Panc1 (cell line): ENCODE measurements at regions of chr3 and their contacts with region 1.

Region 1: GRCh38 chr3:134794950-134795745 is at the start of gene EPHB1:
- DNase-seq: peak; percentile 54
- ATAC-seq: peak; percentile 90
- H3K4me3 ChIP-seq: peak within 1 kb of the TSS; percentile 45 to 56
- H3K27ac ChIP-seq: no peak within 1 kb of the TSS
- H3K4me1 ChIP-seq: no peaks in the 10 kb centered on the region; the same call in 1 of the 2 replicates
- H3K27me3 ChIP-seq: peaks cover 29% of the 10 kb centered on the region
- CTCF ChIP-seq: peak; percentile 99
- total RNA-seq, gene EPHB1: 0.46 TPM

Region 2: DNA sequence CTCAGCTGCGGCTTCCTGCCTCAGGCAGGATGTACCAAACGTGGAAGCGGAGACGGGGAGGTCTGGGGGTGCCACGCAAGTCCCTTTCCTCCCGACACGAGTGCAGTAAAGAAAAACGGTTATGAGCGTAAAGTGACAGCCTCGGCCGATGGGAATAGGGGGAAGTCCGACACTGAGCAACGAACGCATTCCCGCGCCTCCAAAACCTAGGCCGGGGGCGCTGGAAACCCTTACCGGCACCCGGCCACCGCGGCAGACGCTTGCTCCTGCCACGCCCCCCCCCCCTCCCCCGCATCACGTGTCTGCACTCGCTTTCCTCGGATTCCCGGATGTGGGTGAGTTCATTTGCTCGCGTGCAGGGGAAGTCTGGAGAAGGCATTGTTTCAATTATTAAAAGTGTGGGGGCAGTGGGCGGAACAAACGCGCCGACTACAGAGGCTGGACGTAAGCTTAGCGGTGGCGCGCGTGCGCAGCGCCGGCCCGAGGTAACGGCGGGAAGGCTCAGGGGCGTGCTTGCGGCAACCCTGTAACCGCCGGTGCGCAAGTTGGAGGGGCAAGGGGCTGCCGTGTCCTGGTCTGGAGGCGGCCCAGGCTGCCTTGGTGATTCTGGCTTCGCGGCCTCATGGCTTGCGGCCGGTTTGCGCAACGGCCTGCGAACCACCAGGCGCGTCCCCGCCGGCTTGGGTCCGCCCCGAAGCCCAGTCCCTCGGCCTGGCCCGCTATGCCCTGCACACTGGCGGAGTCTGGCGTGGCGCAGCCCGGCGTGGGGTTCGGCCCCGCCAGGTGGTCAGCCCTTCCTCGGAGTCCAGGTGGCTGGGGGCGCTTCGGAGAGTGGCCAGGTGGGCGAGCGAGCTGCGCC is 309.2 kb before region 1 on chr3 and contains the starts of genes ANAPC13 and CEP63:
- CTCF ChIA-PET with region 1: no interaction called
- POLR2A ChIA-PET with region 1: no interaction called
- in situ Hi-C with region 1: no loop called
- intact Hi-C with region 1: no loop called
- DNase-seq: peak; percentile 97
- ATAC-seq: peak; percentile 93
- H3K4me3 ChIP-seq: peak within 1 kb of the TSS; percentile 96 to 98
- H3K27ac ChIP-seq: peak within 1 kb of the TSS; percentile 100
- H3K4me1 ChIP-seq: peaks cover 30% of the 10 kb centered on the region
- H3K27me3 ChIP-seq: no peaks in the 10 kb centered on the region
- CTCF ChIP-seq: no peak
- total RNA-seq, gene ANAPC13: 68.8 TPM
- total RNA-seq, gene CEP63: 30.5 TPM

Region 3: GRCh38 chr3:134542287-134542958 is 252.7 kb before region 1 on chr3:
- CTCF ChIA-PET with region 1: no interaction called
- POLR2A ChIA-PET with region 1: no interaction called
- in situ Hi-C with region 1: no loop called
- intact Hi-C with region 1: no loop called
- DNase-seq: no peak
- ATAC-seq: peak; percentile 30; the same call in 1 of the 2 replicates
- H3K4me3 ChIP-seq: no peak overlapping the region
- H3K27ac ChIP-seq: no peak overlapping the region
- H3K4me1 ChIP-seq: no peaks in the 10 kb centered on the region
- H3K27me3 ChIP-seq: no peaks in the 10 kb centered on the region
- CTCF ChIP-seq: peak; percentile 22

Region 4: DNA sequence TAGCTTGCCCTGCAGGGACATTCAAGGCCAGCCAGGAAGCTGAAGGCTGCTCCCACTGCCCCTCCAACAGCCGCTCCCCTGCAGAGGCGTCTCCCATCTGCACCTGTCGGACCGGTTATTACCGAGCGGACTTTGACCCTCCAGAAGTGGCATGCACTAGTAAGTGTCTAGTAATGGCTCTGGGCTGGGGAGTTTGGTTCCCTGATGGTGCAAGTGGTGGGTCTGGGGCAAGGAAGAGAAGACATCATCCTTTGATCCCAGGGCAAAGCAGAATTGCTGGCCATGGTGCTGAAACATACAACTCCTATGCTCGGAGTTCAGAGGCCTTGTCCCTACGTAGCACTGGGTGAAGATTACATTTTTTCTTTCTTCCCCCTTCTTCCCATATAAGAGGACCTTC is 311.3 kb after region 1 on chr3:
- CTCF ChIA-PET with region 1: interaction called, 12 read pairs
- POLR2A ChIA-PET with region 1: no interaction called
- in situ Hi-C with region 1: no loop called
- intact Hi-C with region 1: no loop called
- DNase-seq: no peak
- ATAC-seq: no peak
- H3K4me3 ChIP-seq: no peak overlapping the region
- H3K27ac ChIP-seq: no peak overlapping the region
- H3K4me1 ChIP-seq: no peaks in the 10 kb centered on the region
- H3K27me3 ChIP-seq: no peaks in the 10 kb centered on the region
- CTCF ChIP-seq: no peak

Region 5: GRCh38 chr3:135229018-135229495 is 433.9 kb after region 1 on chr3:
- CTCF ChIA-PET with region 1: no interaction called
- POLR2A ChIA-PET with region 1: no interaction called
- in situ Hi-C with region 1: no loop called
- intact Hi-C with region 1: loop called (anchors 10 kb)
- DNase-seq: no peak
- ATAC-seq: no peak
- H3K4me3 ChIP-seq: no peak overlapping the region
- H3K27ac ChIP-seq: no peak overlapping the region
- H3K4me1 ChIP-seq: no peaks in the 10 kb centered on the region
- H3K27me3 ChIP-seq: no peaks in the 10 kb centered on the region
- CTCF ChIP-seq: no peak

Region 6: DNA sequence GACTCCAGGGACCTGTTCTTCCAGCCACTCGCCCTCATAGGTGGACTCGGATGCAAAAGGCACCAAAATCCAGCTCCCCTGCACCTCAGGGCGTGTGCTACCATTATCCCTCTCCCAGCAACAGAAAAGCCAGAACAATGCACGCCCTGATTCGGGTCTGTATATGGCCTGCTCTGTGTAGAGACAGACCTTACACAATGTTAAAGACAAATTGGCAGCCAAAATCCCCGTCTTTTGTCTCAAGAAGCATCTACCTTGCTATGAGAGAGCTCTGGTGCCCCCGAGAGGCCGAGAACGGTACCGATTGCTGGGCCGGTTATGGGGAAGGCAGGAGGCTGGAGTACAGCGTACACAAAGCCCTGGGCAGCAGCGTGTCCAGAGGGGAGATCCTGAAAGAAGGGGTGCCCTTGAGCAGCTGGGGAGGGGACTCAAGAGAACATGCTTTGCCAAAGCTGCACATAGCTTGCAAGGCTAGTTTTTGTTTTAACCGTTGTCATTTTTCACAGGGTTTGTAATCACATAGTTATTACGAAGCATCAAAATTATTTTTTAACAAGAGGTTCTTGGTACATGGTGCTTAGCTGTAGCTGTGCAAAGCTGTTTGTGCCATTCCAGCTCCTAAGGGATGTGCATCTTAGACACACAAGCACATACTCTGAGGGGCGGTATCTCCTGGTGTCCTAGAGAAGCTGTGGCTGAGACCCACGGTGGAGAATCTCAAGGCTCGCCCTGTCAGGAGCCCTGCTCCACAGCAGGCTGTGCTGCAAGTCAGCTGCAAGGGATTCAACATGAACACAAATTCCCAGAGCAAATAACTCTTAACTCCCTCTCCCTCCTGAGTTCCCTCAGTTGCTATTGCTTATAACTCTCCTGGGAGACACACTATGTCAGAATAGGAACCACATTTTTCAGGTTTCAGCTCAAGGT is 708.9 kb after region 1 on chr3:
- CTCF ChIA-PET with region 1: interaction called, 21 read pairs
- POLR2A ChIA-PET with region 1: no interaction called
- in situ Hi-C with region 1: no loop called
- intact Hi-C with region 1: loop called (anchors 2 kb)
- DNase-seq: peak; percentile 25
- ATAC-seq: peak; percentile 97
- H3K4me3 ChIP-seq: no peak overlapping the region
- H3K27ac ChIP-seq: no peak overlapping the region
- H3K4me1 ChIP-seq: no peaks in the 10 kb centered on the region
- H3K27me3 ChIP-seq: peaks cover 11% of the 10 kb centered on the region
- CTCF ChIP-seq: peak; percentile 86

Region 7: GRCh38 chr3:135895106-135895733 is 1100.1 kb after region 1 on chr3:
- CTCF ChIA-PET with region 1: interaction called, 3 read pairs
- POLR2A ChIA-PET with region 1: no interaction called
- in situ Hi-C with region 1: no loop called
- intact Hi-C with region 1: loop called (anchors 1 kb)
- DNase-seq: peak; percentile 69
- ATAC-seq: peak; percentile 87
- H3K4me3 ChIP-seq: no peak overlapping the region
- H3K27ac ChIP-seq: no peak overlapping the region
- H3K4me1 ChIP-seq: no peaks in the 10 kb centered on the region
- H3K27me3 ChIP-seq: no peaks in the 10 kb centered on the region; the same call in 1 of the 2 replicates
- CTCF ChIP-seq: peak; percentile 94

Region 8: DNA sequence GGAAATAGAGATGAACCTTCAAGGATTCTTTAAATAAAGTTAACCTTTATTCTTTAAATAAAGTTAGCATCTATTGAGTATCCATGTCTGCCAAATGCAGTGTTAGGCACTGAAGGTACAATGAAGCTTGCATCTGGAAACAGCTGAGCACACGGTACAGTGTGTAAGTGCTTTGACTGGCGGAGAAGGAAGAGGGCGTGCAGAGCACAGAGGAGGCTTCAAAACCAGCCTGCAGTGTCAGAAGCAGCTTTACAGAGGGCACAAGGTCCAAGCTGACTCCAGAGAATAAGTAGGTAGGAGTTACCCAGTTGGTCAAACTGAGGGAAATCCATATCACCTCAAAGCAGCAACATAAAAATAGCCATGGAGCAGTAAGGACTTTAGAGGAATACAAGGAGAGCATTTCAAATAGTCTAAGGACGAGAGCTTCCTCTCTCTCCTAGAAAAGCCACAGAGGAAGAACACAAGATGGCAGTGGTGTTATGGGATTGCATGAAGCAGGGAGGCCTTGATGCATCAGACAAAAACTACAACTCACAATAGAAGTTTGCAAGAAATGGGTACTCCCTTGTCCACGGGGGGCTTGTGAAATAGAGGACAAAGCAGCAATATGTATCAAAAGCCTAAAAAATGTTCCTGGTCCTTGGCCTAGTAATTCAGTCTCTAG is 1110.0 kb after region 1 on chr3:
- CTCF ChIA-PET with region 1: interaction called, 14 read pairs
- POLR2A ChIA-PET with region 1: no interaction called
- in situ Hi-C with region 1: no loop called
- intact Hi-C with region 1: no loop called
- DNase-seq: no peak
- ATAC-seq: peak; percentile 63; the same call in 1 of the 2 replicates
- H3K4me3 ChIP-seq: no peak overlapping the region
- H3K27ac ChIP-seq: no peak overlapping the region
- H3K4me1 ChIP-seq: no peaks in the 10 kb centered on the region
- H3K27me3 ChIP-seq: 0 out of 2 replicates have a peak, but pooled peaks cover 4% of the 10 kb centered on the region
- CTCF ChIP-seq: peak; percentile 45

Region 9: DNA sequence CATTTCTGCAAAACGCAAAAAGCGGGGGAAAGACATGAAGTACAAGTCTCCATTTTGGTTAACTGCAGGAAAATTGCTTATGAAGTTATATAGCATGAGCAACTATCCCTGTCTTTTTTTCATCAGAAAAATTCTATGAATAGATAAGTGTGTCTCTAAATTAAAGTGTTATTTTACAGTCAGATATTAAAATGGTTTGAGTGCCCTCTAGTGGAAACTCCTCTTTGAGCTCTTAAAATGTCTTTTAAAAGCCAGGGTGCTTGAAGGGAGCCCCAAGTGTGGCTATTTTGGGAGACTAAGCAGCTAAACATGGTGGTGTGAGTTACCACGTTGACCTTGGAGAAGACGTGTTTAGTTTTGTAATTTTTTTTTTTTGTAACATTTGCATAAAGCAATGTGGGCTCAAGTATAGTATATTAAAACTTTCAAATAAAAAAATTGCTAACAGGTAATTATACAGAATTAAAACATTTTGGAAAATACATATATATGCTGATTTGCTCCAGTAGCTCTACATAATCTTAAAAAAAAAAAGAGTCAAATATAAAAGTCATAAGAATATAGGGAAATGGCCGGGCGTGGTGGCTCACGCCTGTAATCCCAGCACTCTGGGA is 1247.6 kb after region 1 on chr3:
- CTCF ChIA-PET with region 1: interaction called, 10 read pairs
- POLR2A ChIA-PET with region 1: no interaction called
- in situ Hi-C with region 1: no loop called
- intact Hi-C with region 1: no loop called
- DNase-seq: peak; percentile 15
- ATAC-seq: no peak
- H3K4me3 ChIP-seq: no peak overlapping the region
- H3K27ac ChIP-seq: no peak overlapping the region
- H3K4me1 ChIP-seq: no peaks in the 10 kb centered on the region
- H3K27me3 ChIP-seq: no peaks in the 10 kb centered on the region
- CTCF ChIP-seq: peak; percentile 77; the same call in 1 of the 2 replicates